BJ (cell line): ENCODE measurements at regions of chr2 and their contacts with region 1.

Region 1: GRCh38 chr2:71060871-71061270 is 7.6 kb upstream of the NAGK start:
- DNase-seq: no peak
- H3K4me3 ChIP-seq: no peak overlapping the region
- H3K27me3 ChIP-seq: peaks cover 10% of the 10 kb centered on the region
- CTCF ChIP-seq: no peak

Region 2: GRCh38 chr2:71129863-71130112 is 68.9 kb after region 1 on chr2:
- CTCF ChIA-PET with region 1: no interaction called
- POLR2A ChIA-PET with region 1: interaction called, 18 read pairs
- DNase-seq: peak; percentile 19
- H3K4me3 ChIP-seq: peak overlapping the region; percentile 79
- H3K27me3 ChIP-seq: no peaks in the 10 kb centered on the region
- CTCF ChIP-seq: no peak